ENCODE measurements at regions of chr16 and their contacts with region 1.

Region 1: DNA sequence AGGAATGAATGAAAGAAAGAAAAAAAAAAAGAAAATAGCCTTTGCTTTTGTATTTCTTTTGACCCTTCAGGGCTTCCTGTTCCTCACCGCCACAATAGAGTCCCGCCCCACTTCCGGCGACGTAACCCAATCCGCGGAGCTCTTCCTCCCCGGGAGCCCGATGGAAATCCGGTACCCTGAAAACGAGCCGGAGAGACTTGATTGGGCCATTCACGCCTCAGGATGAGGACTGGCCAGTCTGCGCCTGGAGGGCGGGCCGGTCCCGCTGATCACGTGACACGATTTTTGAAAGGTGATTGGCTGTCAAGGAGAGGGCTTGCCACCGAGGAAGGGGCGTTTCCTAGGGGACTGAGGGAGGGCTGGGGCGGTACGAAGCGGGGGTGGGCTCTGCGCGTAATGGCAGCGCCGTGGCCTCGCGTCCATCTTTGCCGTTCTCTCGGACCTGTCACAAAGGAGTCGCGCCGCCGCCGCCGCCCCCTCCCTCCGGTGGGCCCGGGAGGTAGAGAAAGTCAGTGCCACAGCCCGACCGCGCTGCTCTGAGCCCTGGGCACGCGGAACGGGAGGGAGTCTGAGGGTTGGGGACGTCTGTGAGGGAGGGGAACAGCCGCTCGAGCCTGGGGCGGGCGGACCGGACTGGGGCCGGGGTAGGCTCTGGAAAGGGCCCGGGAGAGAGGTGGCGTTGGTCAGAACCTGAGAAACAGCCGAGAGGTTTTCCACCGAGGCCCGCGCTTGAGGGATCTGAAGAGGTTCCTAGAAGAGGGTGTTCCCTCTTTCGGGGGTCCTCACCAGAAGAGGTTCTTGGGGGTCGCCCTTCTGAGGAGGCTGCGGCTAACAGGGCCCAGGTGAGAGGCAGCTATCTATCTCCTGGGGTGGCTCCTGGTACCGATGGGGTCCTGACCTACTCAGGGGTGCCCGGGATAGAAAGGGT is at the starts of genes PSME3IP1 and RSPRY1:
- DNase-seq: peak; percentile 99
- H3K4me3 Mint-ChIP-seq: peak within 1 kb of the TSS; percentile 95
- H3K27ac Mint-ChIP-seq: peak within 1 kb of the TSS; percentile 98
- H3K4me1 Mint-ChIP-seq: peaks cover 35% of the 10 kb centered on the region
- H3K27me3 Mint-ChIP-seq: no peaks in the 10 kb centered on the region
- CTCF ChIP-seq: no peak
- total RNA-seq, gene PSME3IP1: 100 and 107 TPM in 2 replicates
- total RNA-seq, gene RSPRY1: 55.9 and 62.0 TPM in 2 replicates

Region 2: GRCh38 chr16:56931892-56932720 is 254.1 kb before region 1 on chr16 and contains the start of gene HERPUD1:
- CTCF ChIA-PET with region 1: no interaction called
- POLR2A ChIA-PET with region 1: interaction called, 28 read pairs
- intact Hi-C with region 1: no loop called
- DNase-seq: peak; percentile 98
- H3K4me3 Mint-ChIP-seq: peak within 1 kb of the TSS; percentile 99
- H3K27ac Mint-ChIP-seq: peak within 1 kb of the TSS; percentile 100
- H3K4me1 Mint-ChIP-seq: peaks cover 8% of the 10 kb centered on the region
- H3K27me3 Mint-ChIP-seq: no peaks in the 10 kb centered on the region
- CTCF ChIP-seq: no peak
- total RNA-seq, gene HERPUD1: 201 and 242 TPM in 2 replicates

Region 3: GRCh38 chr16:57213462-57213861 is 27.3 kb after region 1 on chr16:
- CTCF ChIA-PET with region 1: interaction called, 4 read pairs
- POLR2A ChIA-PET with region 1: interaction called, 67 read pairs
- intact Hi-C with region 1: no loop called
- DNase-seq: peak; percentile 86
- H3K4me3 Mint-ChIP-seq: no peak overlapping the region
- H3K27ac Mint-ChIP-seq: peak overlapping the region; percentile 80
- H3K4me1 Mint-ChIP-seq: peaks cover 8% of the 10 kb centered on the region
- H3K27me3 Mint-ChIP-seq: no peaks in the 10 kb centered on the region
- CTCF ChIP-seq: no peak

Region 4: GRCh38 chr16:57265850-57266530 is 79.8 kb after region 1 on chr16:
- CTCF ChIA-PET with region 1: interaction called, 4 read pairs
- POLR2A ChIA-PET with region 1: interaction called, 30 read pairs
- intact Hi-C with region 1: no loop called
- DNase-seq: peak; percentile 84
- H3K4me3 Mint-ChIP-seq: peak overlapping the region; percentile 69
- H3K27ac Mint-ChIP-seq: peak overlapping the region; percentile 89
- H3K4me1 Mint-ChIP-seq: peaks cover 25% of the 10 kb centered on the region
- H3K27me3 Mint-ChIP-seq: no peaks in the 10 kb centered on the region
- CTCF ChIP-seq: no peak

Region 5: DNA sequence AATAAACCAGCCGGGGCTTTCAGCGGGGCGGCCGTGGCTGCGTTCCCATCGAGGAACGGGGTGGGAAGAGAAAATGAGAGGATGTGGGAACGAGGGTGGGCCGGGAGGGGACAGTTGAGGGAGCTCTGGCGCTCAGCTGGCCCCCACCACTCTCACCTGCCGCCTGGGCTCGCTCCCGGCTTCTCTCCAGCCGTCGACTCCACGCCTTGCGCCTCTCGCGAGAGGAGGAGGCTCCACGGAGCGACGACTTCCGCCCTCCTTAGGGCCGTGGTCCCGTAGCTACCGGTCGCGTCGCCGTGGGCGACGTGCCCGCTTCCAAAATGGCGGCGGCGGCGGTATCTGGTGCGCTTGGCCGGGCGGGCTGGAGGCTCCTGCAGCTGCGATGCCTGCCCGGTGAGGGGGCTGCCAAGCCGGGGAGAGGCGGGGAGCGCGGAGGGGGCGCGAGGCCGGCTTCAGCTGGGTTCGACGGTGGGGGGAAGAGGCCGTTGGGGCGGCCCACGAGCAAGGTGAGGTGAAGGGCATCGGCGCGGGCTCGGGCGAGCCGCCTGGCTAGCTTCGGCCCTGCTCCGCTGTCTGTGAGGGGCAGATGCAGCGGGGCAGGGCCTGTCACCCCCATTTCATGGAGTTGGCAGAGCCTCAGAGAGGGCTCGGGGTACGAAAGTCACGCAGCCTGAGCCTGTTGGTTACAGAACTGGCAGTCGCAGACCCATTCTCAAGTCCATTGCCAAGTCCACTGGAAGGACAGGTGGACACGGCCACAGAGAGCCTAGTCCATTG is 261.2 kb after region 1 on chr16 and contains the starts of genes CIAPIN1 and COQ9:
- CTCF ChIA-PET with region 1: no interaction called
- POLR2A ChIA-PET with region 1: interaction called, 14 read pairs
- intact Hi-C with region 1: no loop called
- DNase-seq: peak; percentile 95
- H3K4me3 Mint-ChIP-seq: peak within 1 kb of the TSS; percentile 90
- H3K27ac Mint-ChIP-seq: peak within 1 kb of the TSS; percentile 97
- H3K4me1 Mint-ChIP-seq: peaks cover 9% of the 10 kb centered on the region
- H3K27me3 Mint-ChIP-seq: no peaks in the 10 kb centered on the region
- CTCF ChIP-seq: no peak
- total RNA-seq, gene CIAPIN1: 99.9 and 105 TPM in 2 replicates
- total RNA-seq, gene COQ9: 72.5 and 80.8 TPM in 2 replicates